Panc1 (cell line): ENCODE measurements at regions of chr12 and their contacts with region 1.

Region 1: GRCh38 chr12:64222009-64222765 is at the start of gene KICS2:
- DNase-seq: peak; percentile 67
- ATAC-seq: peak; percentile 96
- H3K4me3 ChIP-seq: peak within 1 kb of the TSS; percentile 82 to 88
- H3K27ac ChIP-seq: peak within 1 kb of the TSS; percentile 86
- H3K4me1 ChIP-seq: peaks cover 30% of the 10 kb centered on the region
- H3K27me3 ChIP-seq: no peaks in the 10 kb centered on the region
- CTCF ChIP-seq: no peak
- total RNA-seq, gene KICS2: 9.6 TPM

Region 2: GRCh38 chr12:63967358-63968145 is 254.6 kb before region 1 on chr12:
- CTCF ChIA-PET with region 1: interaction called, 10 read pairs
- POLR2A ChIA-PET with region 1: no interaction called
- in situ Hi-C with region 1: no loop called
- intact Hi-C with region 1: no loop called
- DNase-seq: no peak
- ATAC-seq: 0 out of 2 replicates have a peak, but pooled peaks have one; percentile 30
- H3K4me3 ChIP-seq: no peak overlapping the region
- H3K27ac ChIP-seq: no peak overlapping the region; the same call in 1 of the 2 replicates
- H3K4me1 ChIP-seq: peaks cover 9% of the 10 kb centered on the region
- H3K27me3 ChIP-seq: no peaks in the 10 kb centered on the region
- CTCF ChIP-seq: no peak

Region 3: DNA sequence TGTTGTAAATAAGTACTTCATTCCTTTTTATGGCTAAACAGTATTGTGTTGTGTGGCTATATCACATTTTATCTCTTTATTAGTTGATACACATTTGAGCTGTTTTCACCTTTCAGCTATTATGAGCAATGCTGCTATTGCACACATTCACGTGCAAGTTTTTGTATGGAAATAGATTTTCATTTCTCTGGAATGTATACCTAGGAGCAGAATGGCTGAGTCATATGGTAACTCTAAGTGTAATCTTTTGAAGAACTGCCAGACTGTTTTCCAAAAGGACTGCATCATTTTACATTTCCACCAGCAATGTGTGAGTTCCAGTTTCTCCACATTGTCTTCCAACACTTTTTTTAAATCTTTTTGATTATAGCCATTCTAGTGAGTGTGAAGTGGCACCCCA is 243.7 kb before region 1 on chr12:
- CTCF ChIA-PET with region 1: interaction called, 16 read pairs
- POLR2A ChIA-PET with region 1: no interaction called
- in situ Hi-C with region 1: no loop called
- intact Hi-C with region 1: no loop called
- DNase-seq: peak; percentile 78
- ATAC-seq: peak; percentile 85
- H3K4me3 ChIP-seq: no peak overlapping the region
- H3K27ac ChIP-seq: peak overlapping the region; percentile 18
- H3K4me1 ChIP-seq: peaks cover 35% of the 10 kb centered on the region
- H3K27me3 ChIP-seq: no peaks in the 10 kb centered on the region
- CTCF ChIP-seq: no peak

Region 4: DNA sequence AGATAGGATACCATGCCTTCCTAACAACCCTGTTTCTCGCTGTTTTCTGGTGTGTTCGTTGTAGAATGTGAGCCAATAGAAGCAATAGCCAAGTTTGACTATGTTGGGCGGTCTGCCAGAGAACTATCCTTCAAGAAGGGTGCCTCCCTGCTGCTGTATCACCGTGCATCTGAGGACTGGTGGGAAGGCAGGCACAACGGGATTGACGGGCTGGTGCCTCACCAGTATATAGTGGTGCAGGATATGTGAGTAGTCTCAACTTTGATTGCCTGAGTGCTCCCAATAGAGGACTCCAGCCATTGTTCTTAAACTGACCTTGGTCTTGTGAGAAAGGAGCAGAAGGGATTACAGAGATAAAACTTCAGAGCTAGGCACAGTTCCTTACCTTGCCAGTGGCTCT is 96.3 kb before region 1 on chr12:
- CTCF ChIA-PET with region 1: no interaction called
- POLR2A ChIA-PET with region 1: interaction called, 10 read pairs
- in situ Hi-C with region 1: no loop called
- intact Hi-C with region 1: no loop called
- DNase-seq: no peak
- ATAC-seq: no peak
- H3K4me3 ChIP-seq: no peak overlapping the region
- H3K27ac ChIP-seq: no peak overlapping the region
- H3K4me1 ChIP-seq: no peaks in the 10 kb centered on the region
- H3K27me3 ChIP-seq: no peaks in the 10 kb centered on the region
- CTCF ChIP-seq: no peak